Transverse colon (tissue), 4 donors: ENCODE measurements at regions of chr21 and their contacts with region 1.

Region 1: DNA sequence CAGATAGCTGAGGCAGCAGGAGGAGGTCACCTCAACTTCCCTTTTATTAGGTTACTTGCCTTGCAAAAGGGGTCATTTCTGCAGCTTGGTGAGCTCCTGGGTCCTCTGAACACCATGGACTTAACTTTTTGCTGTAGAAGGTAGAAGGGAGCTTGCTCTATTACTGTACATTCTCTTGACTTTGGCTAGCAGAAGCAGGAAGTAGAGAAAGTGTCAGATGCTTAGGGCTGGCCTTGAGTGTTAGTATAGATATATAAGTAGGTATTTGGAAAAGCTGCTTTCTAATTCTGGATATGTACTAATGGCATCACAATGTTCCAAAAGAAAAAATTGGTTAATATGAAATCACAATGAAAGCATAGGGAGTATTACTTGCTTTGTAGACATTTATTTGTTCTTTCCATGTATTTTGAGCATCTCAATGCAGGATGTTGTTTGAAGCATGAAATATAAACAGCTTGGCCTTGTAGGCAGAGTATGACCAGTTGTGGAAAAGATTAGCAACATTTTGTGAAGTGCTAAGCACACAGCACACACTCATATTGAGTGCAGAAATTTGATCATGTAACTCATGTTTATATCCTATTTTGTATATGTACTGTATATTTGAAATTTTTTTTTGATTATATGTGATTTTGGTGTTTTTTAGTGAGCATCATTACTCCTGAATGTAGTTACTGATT is 108.8 kb downstream of the DYRK1A start:
- DNase-seq: no peak
- H3K4me3 ChIP-seq: no peak overlapping the region
- H3K27ac ChIP-seq: no peak overlapping the region
- H3K4me1 ChIP-seq: peaks cover 11 to 40% (median 15%) of the 10 kb centered on the region in 4 donors
- H3K27me3 ChIP-seq: no peaks in the 10 kb centered on the region
- CTCF ChIP-seq: no peak
- EP300 ChIP-seq: no peak
- POLR2A ChIP-seq: no peak

Region 2: GRCh38 chr21:37398697-37399096 is 76.6 kb before region 1 on chr21:
- in situ Hi-C with region 1: no loop called
- intact Hi-C with region 1: loop called (anchors 1 kb)
- DNase-seq: no peak
- H3K4me3 ChIP-seq: no peak overlapping the region
- H3K27ac ChIP-seq: no peak overlapping the region
- H3K4me1 ChIP-seq: peaks cover 6 to 43% (median 19%) of the 10 kb centered on the region in 4 donors
- H3K27me3 ChIP-seq: no peaks in the 10 kb centered on the region
- CTCF ChIP-seq: no peak
- EP300 ChIP-seq: no peak
- POLR2A ChIP-seq: no peak

Region 3: DNA sequence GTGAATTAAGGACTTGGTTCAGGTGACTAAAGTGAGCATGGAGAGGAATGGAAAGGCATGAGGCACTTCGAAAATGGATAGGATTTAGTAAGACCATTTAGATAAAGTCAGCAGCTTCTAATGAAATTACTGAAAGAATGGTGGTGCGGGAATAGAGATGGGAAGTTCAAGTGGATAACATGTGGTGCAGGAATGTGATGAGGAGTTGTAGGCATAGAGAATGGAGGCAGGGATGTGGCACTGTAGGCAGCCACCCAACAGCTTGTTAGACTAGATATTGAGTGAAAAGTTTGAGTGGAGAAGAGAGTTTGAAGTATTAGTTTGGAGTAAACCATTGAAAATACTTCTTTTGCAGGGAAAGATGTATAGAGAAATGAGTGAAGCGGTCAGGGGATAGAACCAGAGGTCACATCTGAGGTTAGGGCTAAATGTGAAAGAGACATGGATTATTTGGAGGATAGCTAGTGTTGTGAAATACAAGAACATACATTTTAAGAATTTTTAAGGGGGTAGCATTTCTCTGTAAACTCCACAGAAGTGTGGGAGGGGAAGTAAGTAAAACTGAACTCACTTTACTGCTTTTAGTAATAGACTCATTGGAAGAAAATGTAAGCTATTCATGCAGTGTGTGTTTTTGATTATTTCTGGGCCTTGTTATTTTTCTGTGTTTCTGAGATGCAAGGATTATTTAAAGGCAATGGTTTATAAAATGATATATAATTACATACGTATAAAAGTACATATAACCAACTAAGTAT is 62.5 kb before region 1 on chr21:
- in situ Hi-C with region 1: no loop called
- intact Hi-C with region 1: no loop called
- DNase-seq: no peak
- H3K4me3 ChIP-seq: no peak overlapping the region
- H3K27ac ChIP-seq: no peak overlapping the region
- H3K4me1 ChIP-seq: peaks cover 10 to 92% (median 42%) of the 10 kb centered on the region in 4 donors
- H3K27me3 ChIP-seq: no peaks in the 10 kb centered on the region
- CTCF ChIP-seq: no peak
- EP300 ChIP-seq: no peak
- POLR2A ChIP-seq: no peak